Activated T-helper 2 cell treated with anti-CD3 and anti-CD28 coated beads, Interferon-gamma antibody, Interleukin-2, Interleukin-4, amounts not matched to agents 10 μg/mL and 5 μg/mL and 100 μg/mL, durations not matched to agents 14 hours and 24 hours and 36 hours (primary cell): ENCODE measurements at regions of chr6 and their contacts with region 1.

Region 1: GRCh38 chr6:89432875-89433251 is at the start of gene ANKRD6:
- DNase-seq: peak; percentile 73
- H3K4me3 Mint-ChIP-seq: peak within 1 kb of the TSS; percentile 79
- H3K27ac Mint-ChIP-seq: peak within 1 kb of the TSS; percentile 20
- H3K4me1 Mint-ChIP-seq: peaks cover 14% of the 10 kb centered on the region
- H3K27me3 Mint-ChIP-seq: peaks cover 55% of the 10 kb centered on the region
- total RNA-seq, gene ANKRD6: 2.2 TPM in 2 replicates

Region 2: DNA sequence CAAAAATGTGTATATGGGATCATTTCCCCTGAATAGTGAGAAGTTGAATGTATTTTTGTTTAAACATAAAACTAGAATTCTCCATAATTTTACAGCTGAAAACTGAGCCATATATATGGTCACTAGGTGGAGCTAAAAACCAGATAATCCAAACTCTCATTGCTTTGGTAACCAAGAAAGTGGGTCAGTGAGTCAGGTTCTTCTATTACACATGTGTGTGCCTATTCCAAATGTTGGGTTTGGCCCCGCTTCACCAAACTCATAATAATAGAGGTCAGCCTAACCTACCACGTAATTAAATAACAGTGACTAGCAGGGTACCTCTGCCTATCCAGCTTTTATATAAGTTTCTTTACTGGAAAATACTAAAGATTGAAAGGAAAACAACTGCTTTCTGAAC is 450.1 kb before region 1 on chr6:
- intact Hi-C with region 1: loop called (anchors 5 kb)
- DNase-seq: no peak
- H3K4me3 Mint-ChIP-seq: no peak overlapping the region
- H3K27ac Mint-ChIP-seq: no peak overlapping the region
- H3K4me1 Mint-ChIP-seq: no peaks in the 10 kb centered on the region
- H3K27me3 Mint-ChIP-seq: peaks cover 10% of the 10 kb centered on the region

Region 3: DNA sequence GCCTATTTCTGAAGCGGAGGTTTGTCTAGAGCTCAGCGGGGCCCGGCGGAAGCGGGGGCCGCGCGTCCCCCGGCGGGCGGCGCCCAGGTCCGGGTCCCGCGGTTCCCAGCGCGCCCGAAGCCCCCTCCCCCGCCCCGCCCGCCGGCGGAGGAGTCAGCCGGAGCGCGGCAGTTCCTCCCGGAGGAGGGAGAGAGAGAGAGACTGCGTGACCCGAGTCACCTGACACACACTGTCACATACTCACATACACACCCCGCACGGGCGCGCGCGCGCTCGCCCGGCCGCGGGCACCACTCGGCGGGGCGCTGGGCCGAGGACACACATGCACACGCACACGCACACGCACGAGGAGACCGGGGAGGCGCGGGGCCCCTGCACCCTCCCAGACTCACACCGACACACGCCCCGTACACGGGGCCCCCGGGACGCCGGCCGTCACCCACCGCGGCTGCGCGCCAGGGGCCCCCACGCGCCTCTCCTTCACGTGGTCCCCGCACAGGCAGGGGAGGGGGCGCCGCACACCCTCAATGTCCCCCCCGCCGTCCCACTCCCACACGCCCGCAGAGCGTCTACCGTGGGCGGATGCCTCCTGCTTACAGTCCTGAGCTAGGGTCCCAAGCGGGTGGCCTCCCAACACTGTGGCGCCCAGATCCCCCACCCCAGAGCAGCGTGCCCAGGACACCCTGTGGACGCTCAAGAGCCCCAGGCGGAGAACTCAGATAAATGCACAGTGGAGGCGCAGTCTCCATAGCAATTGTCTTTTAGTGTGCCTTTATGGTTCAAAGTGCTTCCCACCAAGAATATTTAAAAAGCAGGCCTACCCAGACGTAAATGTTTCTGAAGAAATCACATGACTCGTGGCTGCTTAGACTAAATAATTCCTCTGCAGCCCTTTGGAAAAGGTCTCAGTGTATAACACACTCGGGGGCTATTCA is 20.5 kb before region 1 on chr6 and contains the start of gene RRAGD:
- intact Hi-C with region 1: loop called (anchors 2 kb)
- DNase-seq: peak; percentile 53
- H3K4me3 Mint-ChIP-seq: peak within 1 kb of the TSS; percentile 93
- H3K27ac Mint-ChIP-seq: peak within 1 kb of the TSS; percentile 86
- H3K4me1 Mint-ChIP-seq: peaks cover 16% of the 10 kb centered on the region
- H3K27me3 Mint-ChIP-seq: peaks cover 57% of the 10 kb centered on the region
- total RNA-seq, gene RRAGD: 6.3 and 7.2 TPM in 2 replicates

Region 4: DNA sequence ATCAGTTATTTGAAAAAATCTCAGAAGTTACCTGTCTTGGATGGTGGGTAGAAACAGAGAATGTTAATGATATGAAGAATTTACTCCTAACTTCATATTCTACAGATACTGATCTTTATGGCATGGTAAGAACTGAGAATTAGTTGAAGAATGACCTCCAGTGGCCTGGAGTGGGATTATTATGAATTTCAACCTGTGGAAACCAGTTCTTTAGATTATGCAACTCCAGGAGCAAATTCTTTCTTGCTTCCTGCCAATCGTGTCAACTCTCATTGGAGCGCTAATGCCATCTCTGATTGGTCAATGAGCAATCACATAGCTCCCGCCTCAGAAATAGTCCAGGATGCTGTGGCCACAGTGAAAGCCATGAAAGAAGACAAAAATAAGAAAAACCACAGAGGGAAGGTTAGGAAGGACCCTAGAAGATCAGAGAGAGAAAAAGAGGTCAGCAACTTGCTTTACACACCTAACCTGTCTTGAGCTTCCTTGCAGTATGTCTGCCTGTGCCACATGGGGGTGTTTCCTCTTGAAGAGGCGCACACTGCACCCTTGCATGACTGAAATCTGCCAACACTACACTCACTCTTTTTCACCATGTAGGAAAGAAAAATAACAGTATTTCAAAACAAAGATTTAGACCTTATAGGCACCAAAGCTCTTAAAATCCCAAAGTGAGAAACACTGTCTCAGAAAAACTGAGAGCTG is 165.3 kb after region 1 on chr6:
- intact Hi-C with region 1: loop called (anchors 5 kb)
- DNase-seq: no peak
- H3K4me3 Mint-ChIP-seq: no peak overlapping the region
- H3K27ac Mint-ChIP-seq: no peak overlapping the region
- H3K4me1 Mint-ChIP-seq: peaks cover 29% of the 10 kb centered on the region
- H3K27me3 Mint-ChIP-seq: no peaks in the 10 kb centered on the region

Region 5: GRCh38 chr6:89610149-89610642 is 177.3 kb after region 1 on chr6:
- intact Hi-C with region 1: loop called (anchors 1 kb)
- DNase-seq: peak; percentile 57
- H3K4me3 Mint-ChIP-seq: no peak overlapping the region
- H3K27ac Mint-ChIP-seq: no peak overlapping the region
- H3K4me1 Mint-ChIP-seq: no peaks in the 10 kb centered on the region
- H3K27me3 Mint-ChIP-seq: no peaks in the 10 kb centered on the region